ENCODE measurements at regions of chr1 and their contacts with region 1.

Region 1: GRCh38 chr1:210400043-210400840 is 71.5 kb downstream of the HHAT start:
- DNase-seq: peak; percentile 23
- H3K4me3 Mint-ChIP-seq: no peak overlapping the region
- H3K27ac Mint-ChIP-seq: no peak overlapping the region
- H3K4me1 Mint-ChIP-seq: peaks cover 13% of the 10 kb centered on the region
- H3K27me3 Mint-ChIP-seq: peaks cover 24% of the 10 kb centered on the region

Region 2: DNA sequence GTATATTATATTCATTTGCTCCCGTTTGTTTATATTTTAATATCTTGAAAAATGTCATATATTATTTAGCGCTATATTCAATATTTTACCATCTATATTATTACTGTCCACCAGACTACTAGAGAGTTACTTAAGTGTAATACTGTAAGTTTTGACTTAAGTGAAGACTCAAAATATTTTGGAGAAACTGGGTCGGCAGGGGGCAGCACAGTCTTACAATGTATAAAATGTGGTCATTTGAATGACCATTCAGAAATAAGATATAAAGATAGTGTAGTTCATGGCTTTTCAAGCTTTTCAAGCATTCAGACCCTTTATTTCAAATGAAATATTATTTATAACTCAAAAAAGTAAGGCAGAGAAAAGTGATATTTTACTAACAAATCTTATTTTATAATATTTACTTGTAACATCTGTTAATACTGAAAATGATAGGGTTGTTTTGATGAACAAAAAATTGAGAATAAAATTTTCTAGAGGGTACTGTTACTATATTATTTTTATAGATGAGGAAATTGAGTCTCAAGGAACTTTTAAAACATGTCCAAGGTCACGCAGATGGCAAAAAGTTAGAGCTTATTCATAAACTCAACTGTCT is 256.7 kb before region 1 on chr1:
- intact Hi-C with region 1: loop called (anchors 2 kb)
- DNase-seq: no peak
- H3K4me3 Mint-ChIP-seq: no peak overlapping the region
- H3K27ac Mint-ChIP-seq: no peak overlapping the region
- H3K4me1 Mint-ChIP-seq: no peaks in the 10 kb centered on the region
- H3K27me3 Mint-ChIP-seq: no peaks in the 10 kb centered on the region

Region 3: GRCh38 chr1:210332719-210333398 is 67.4 kb before region 1 on chr1:
- intact Hi-C with region 1: loop called (anchors 5 kb)
- DNase-seq: peak; percentile 60
- H3K4me3 Mint-ChIP-seq: peak overlapping the region; percentile 8
- H3K27ac Mint-ChIP-seq: no peak overlapping the region
- H3K4me1 Mint-ChIP-seq: peaks cover 31% of the 10 kb centered on the region
- H3K27me3 Mint-ChIP-seq: peaks cover 25% of the 10 kb centered on the region

Region 4: DNA sequence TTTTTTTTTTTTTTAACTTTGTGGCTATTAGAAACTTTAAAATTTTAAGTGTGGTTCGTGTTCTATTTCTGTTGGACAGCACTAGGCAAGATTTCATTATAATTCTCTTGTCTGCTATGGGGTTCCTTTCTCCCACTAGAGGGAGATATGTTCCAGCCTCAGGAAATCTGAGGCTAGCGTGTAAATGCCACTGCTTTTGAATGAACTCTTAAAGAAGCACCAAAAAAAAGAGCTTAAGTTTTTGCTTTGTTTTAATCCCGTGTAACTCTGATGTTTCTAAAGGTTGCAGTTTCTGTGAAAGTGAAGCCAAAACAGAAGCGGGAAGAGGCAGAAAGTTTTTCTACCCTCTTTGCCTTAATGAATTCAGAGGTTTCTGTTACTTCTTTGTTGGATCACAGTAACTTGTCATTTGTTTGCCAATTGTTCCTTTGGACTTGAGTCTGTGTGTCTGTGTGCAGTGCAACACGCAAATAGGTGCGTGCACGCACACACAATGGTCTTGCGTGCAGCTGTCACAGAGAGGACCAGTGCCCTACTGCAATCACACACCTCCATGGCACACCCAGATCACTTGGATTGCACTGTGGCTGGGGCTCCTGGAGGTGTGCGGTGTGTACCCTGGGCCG is 39.3 kb before region 1 on chr1:
- intact Hi-C with region 1: loop called (anchors 2 kb)
- DNase-seq: no peak
- H3K4me3 Mint-ChIP-seq: no peak overlapping the region
- H3K27ac Mint-ChIP-seq: no peak overlapping the region
- H3K4me1 Mint-ChIP-seq: peaks cover 2% of the 10 kb centered on the region
- H3K27me3 Mint-ChIP-seq: peaks cover 18% of the 10 kb centered on the region

Region 5: DNA sequence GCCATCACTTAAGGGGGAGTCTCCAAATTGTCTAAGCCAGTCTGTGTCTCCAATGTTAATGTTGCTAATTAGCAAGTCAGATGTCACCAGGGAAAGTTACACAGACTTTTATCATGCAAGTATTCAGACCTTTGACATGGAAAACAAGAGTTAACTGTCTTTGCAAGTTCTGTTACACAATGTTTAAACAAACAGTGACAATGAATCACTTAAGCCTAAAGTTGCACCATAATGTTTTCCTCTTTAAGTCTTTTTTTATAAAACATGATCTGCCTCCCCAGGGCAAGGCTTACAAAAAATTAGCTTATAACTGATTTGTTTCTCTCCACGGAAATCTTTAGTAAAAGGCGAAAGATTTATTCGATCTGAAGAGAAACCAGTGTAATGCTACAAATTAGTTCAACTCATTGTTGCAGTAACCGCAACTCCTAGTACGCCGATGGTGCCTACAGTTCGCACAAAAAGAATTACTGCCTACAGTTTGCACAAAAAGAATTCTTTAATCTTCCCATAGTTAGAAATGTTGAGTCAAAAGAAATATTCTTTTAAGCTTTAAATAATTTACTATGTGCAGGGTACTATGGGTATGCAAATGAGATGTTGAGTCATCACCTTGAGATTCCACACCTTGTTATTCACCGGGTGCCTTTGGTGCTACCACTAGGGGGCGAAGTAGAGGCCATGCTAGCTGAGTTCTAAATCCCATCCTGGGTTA is 26.2 kb before region 1 on chr1:
- intact Hi-C with region 1: loop called (anchors 1 kb)
- DNase-seq: peak; percentile 48
- H3K4me3 Mint-ChIP-seq: no peak overlapping the region
- H3K27ac Mint-ChIP-seq: peak overlapping the region; percentile 32
- H3K4me1 Mint-ChIP-seq: peaks cover 10% of the 10 kb centered on the region
- H3K27me3 Mint-ChIP-seq: peaks cover 22% of the 10 kb centered on the region